SK-N-SH (cell line): ENCODE measurements at regions of chr11 and their contacts with region 1.

Region 1: DNA sequence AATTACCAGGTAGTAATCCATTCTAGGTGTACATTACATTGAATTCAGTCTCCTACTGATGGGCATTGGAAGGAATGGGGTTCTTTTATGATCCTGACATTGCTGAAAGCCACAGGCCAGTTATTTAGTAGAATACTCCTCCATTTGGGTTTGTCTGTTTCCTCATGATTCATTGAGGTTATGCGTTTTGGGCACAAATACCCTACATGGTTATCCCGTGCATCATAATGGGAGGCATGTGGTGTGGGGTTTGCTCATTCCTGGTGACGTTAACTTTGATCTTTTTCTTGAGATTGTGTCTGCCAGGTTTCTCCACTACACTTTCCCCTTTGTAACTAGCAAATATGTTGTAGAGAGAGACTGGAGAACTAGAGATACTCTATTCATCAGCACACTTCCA is 5.5 kb downstream of the FOLR3 start:
- DNase-seq: no peak
- H3K4me3 ChIP-seq: no peak overlapping the region
- H3K27ac ChIP-seq: peak overlapping the region in 1 of 2 experiments; percentile 37; a peak in 1 of 4 replicates
- H3K4me1 ChIP-seq: no peaks in the 10 kb centered on the region; a peak in 1 of 4 replicates
- H3K27me3 ChIP-seq: no peaks in the 10 kb centered on the region
- CTCF ChIP-seq: no peak
- EP300 ChIP-seq: no peak
- RAD21 ChIP-seq: no peak

Region 2: DNA sequence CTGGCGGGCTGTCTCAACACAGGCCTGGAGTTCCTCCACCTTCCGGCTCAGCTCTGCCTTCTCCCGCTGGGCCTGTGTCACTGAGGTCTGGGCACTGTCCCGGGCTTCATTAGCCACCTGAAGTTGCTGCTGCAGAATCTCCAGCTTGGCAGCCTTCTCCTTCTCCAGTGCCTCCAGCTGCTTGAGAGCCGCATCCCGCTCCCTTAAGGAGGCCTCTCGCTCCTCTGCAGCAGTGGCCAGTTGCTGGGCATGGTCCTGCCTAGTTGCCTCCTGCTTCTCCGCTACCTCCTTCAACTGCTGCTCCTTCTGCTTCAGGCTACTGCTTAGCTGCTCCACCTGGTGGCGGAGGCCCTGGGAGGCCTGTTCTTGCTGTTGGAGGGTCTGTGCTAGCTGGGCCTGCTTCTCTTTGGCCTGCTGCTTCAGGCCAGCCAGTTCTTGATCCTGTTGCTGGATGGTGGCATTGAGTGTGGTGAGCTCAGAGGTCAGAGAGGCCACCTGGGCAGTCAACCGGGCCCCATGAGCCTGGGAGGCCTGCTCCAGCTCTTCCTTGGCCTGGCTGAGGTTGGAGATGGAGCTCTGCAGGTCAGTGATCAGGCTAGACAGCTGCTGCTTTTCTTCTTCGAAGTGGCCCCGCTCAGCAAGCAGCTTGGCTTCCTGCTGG is 125.4 kb before region 1 on chr11:
- CTCF ChIA-PET with region 1: interaction called, 12 read pairs
- POLR2A ChIA-PET with region 1: no interaction called
- DNase-seq: no peak
- H3K4me3 ChIP-seq: no peak overlapping the region
- H3K27ac ChIP-seq: no peak overlapping the region; a peak in 1 of 4 replicates
- H3K4me1 ChIP-seq: no peaks in the 10 kb centered on the region; a peak in 1 of 4 replicates
- H3K27me3 ChIP-seq: no peaks in the 10 kb centered on the region
- CTCF ChIP-seq: peak; percentile 39; the same call in 1 of the 2 replicates
- EP300 ChIP-seq: no peak
- RAD21 ChIP-seq: peak; percentile 19; the same call in 1 of the 2 replicates

Region 3: GRCh38 chr11:72091005-72091691 is 49.9 kb before region 1 on chr11:
- CTCF ChIA-PET with region 1: interaction called, 12 read pairs
- POLR2A ChIA-PET with region 1: no interaction called
- DNase-seq: peak; percentile 78
- H3K4me3 ChIP-seq: no peak overlapping the region; a peak in 1 of 4 replicates
- H3K27ac ChIP-seq: no peak overlapping the region
- H3K4me1 ChIP-seq: peaks cover 0 to 16% of the 10 kb centered on the region in 2 experiments; a peak in 2 of 4 replicates
- H3K27me3 ChIP-seq: no peaks in the 10 kb centered on the region
- CTCF ChIP-seq: peak; percentile 88
- EP300 ChIP-seq: no peak
- RAD21 ChIP-seq: peak; percentile 86

Region 4: GRCh38 chr11:72123117-72123653 is 17.9 kb before region 1 on chr11:
- CTCF ChIA-PET with region 1: interaction called, 17 read pairs
- POLR2A ChIA-PET with region 1: no interaction called
- DNase-seq: no peak
- H3K4me3 ChIP-seq: no peak overlapping the region
- H3K27ac ChIP-seq: no peak overlapping the region
- H3K4me1 ChIP-seq: no peaks in the 10 kb centered on the region
- H3K27me3 ChIP-seq: no peaks in the 10 kb centered on the region; the same call in 1 of the 2 replicates
- CTCF ChIP-seq: no peak
- EP300 ChIP-seq: no peak
- RAD21 ChIP-seq: no peak

Region 5: DNA sequence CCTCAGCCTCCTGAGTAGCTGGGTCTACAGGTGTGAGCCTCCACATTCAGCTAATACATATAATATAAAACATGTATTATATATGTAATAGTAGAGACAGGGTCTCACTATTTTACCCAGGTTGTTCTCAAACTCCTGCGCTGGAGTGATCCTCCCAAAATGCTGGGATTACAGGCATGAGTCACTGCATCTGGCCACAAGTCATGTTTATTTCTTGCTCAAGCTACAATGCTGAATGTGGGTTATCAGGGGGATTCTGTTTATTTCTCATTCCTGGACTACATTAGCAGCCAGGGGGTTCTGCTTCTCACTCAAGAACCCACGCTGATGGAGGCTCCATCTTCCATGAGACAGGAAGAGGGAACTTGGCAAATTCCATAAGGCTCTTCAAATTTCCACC is 19.3 kb after region 1 on chr11:
- CTCF ChIA-PET with region 1: interaction called, 30 read pairs
- POLR2A ChIA-PET with region 1: no interaction called
- DNase-seq: no peak
- H3K4me3 ChIP-seq: no peak overlapping the region
- H3K27ac ChIP-seq: no peak overlapping the region
- H3K4me1 ChIP-seq: no peaks in the 10 kb centered on the region
- H3K27me3 ChIP-seq: peaks cover 12% of the 10 kb centered on the region; the same call in 1 of the 2 replicates
- CTCF ChIP-seq: no peak
- EP300 ChIP-seq: no peak
- RAD21 ChIP-seq: no peak

Region 6: DNA sequence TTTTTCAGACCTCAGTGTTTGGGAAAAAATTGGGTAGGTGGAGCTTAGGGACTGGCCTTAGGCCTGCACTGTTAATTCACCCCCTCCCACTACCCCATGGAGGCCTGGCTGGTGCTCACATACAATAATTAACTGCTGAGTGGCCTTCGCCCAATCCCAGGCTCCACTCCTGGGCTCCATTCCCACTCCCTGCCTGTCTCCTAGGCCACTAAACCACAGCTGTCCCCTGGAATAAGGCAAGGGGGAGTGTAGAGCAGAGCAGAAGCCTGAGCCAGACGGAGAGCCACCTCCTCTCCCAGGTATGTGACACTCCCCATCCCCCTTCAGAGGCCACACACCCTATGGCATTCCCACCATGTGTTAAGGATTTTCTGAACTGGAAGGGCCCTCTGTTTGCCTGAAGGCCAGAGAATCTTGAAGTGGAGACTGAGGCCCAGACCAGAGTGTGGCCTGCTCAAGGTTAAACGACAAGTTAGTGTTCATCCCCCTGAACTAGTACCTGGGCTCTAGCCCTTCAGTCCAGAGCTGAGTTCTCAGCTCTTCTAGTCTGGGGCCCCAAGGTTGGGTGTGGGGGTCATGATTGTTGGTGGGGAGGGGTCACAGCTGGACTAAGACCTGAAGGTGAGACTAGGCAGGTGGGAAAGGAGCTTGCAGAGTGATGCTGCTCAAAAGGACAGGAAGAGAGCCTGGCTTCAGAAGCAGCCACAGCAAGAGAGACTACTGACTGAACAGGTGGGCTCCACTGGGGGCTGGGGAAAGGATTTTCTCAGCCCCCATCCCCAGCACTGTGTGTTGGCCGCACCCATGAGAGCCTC is 48.6 kb after region 1 on chr11:
- CTCF ChIA-PET with region 1: interaction called, 11 read pairs
- POLR2A ChIA-PET with region 1: no interaction called
- DNase-seq: peak; percentile 27
- H3K4me3 ChIP-seq: no peak overlapping the region
- H3K27ac ChIP-seq: peak overlapping the region in 1 of 2 experiments; percentile 3; a peak in 1 of 4 replicates
- H3K4me1 ChIP-seq: peaks cover 0 to 12% of the 10 kb centered on the region in 2 experiments; a peak in 1 of 4 replicates
- H3K27me3 ChIP-seq: no peaks in the 10 kb centered on the region
- CTCF ChIP-seq: no peak
- EP300 ChIP-seq: no peak
- RAD21 ChIP-seq: no peak